ENCODE measurements at regions of chr11 and their contacts with region 1.

Region 1: DNA sequence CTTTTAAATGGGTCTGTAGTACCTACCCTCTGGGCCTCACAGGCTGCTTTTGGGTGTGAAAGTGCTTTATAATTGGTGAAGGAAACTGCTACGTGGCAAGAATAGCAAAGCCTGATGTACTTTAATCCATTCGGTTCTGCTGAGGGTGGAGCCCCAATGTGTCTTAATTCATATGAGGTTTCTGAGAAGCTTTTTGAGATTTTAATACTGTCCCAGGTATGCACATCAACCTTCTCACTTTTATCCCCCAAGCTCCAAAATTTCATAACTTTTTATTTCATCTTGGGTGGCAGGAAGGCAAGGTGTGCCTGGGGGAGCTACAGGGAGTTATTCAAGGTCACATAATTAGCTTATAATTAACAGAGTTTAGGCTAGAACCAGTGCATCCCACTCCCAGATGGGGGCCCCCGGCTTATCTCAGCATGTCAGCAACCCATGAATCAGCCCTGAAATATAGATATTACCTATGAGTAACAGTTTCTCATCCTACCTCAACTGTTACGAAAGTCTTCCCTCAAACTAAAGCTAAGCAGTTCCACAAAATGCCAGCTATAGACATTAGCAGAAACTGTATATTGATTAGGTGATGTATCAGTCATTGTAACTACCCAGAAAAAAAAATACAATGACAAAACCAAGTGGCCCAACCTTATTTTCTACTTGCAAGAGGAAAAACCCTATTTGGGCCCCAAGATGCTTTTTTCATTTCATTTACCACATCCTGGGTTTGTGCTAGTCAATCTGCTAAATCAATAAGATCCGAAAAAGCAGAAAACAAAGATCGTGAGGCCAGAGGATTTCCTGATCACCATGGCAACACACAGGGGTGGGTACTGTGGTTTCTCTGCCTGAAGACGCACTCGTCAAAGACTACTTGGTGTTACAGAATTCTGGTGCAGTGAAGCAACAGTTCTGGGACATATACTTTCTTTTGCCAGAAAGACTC is 26.7 kb downstream of the CD44 start:
- DNase-seq: peak; percentile 50 to 97 (median 90)
- ATAC-seq: peak; percentile 79 to 85 (median 84)
- H3K4me3 ChIP-seq: peak overlapping the region; percentile 35 to 46
- H3K4me3 Mint-ChIP-seq: peak overlapping the region; percentile 69 to 79 (median 78)
- H3K27ac ChIP-seq: peak overlapping the region; percentile 99
- H3K27ac Mint-ChIP-seq: peak overlapping the region; percentile 100
- H3K4me1 ChIP-seq: peaks cover 90 to 92% of the 10 kb centered on the region in 2 experiments
- H3K4me1 Mint-ChIP-seq: peaks cover 100% of the 10 kb centered on the region in 3 donors
- H3K27me3 ChIP-seq: no peaks in the 10 kb centered on the region
- H3K27me3 Mint-ChIP-seq: no peaks in the 10 kb centered on the region

Region 2: GRCh38 chr11:35013514-35014233 is 152.0 kb before region 1 on chr11:
- CTCF ChIA-PET with region 1: no interaction called
- POLR2A ChIA-PET with region 1: interaction called in 1 of 2 experiments, 23 read pairs
- DNase-seq: peak in 19 of 35 experiments; percentile 5 to 75 (median 32)
- ATAC-seq: peak; percentile 38 to 64 (median 47)
- H3K4me3 ChIP-seq: no peak overlapping the region
- H3K4me3 Mint-ChIP-seq: peak overlapping the region; percentile 21 to 62 (median 22)
- H3K27ac ChIP-seq: peak overlapping the region; percentile 90
- H3K27ac Mint-ChIP-seq: peak overlapping the region; percentile 85 to 86
- H3K4me1 ChIP-seq: peaks cover 13 to 23% of the 10 kb centered on the region in 2 experiments
- H3K4me1 Mint-ChIP-seq: peaks cover 23 to 38% (median 32%) of the 10 kb centered on the region in 3 donors
- H3K27me3 ChIP-seq: no peaks in the 10 kb centered on the region
- H3K27me3 Mint-ChIP-seq: no peaks in the 10 kb centered on the region

Region 3: GRCh38 chr11:35047179-35047578 is 118.5 kb before region 1 on chr11:
- CTCF ChIA-PET with region 1: interaction called in 1 of 2 experiments, 7 read pairs
- POLR2A ChIA-PET with region 1: interaction called, 5 to 72 read pairs
- DNase-seq: peak in 34 of 35 experiments; percentile 29 to 86 (median 58)
- ATAC-seq: peak; percentile 67 to 72 (median 70)
- H3K4me3 ChIP-seq: no peak overlapping the region
- H3K4me3 Mint-ChIP-seq: peak overlapping the region; percentile 1 to 77 (median 42)
- H3K27ac ChIP-seq: peak overlapping the region; percentile 98
- H3K27ac Mint-ChIP-seq: peak overlapping the region; percentile 93 to 95
- H3K4me1 ChIP-seq: peaks cover 59 to 85% of the 10 kb centered on the region in 2 experiments
- H3K4me1 Mint-ChIP-seq: peaks cover 95 to 97% (median 97%) of the 10 kb centered on the region in 3 donors
- H3K27me3 ChIP-seq: no peaks in the 10 kb centered on the region
- H3K27me3 Mint-ChIP-seq: no peaks in the 10 kb centered on the region

Region 4: DNA sequence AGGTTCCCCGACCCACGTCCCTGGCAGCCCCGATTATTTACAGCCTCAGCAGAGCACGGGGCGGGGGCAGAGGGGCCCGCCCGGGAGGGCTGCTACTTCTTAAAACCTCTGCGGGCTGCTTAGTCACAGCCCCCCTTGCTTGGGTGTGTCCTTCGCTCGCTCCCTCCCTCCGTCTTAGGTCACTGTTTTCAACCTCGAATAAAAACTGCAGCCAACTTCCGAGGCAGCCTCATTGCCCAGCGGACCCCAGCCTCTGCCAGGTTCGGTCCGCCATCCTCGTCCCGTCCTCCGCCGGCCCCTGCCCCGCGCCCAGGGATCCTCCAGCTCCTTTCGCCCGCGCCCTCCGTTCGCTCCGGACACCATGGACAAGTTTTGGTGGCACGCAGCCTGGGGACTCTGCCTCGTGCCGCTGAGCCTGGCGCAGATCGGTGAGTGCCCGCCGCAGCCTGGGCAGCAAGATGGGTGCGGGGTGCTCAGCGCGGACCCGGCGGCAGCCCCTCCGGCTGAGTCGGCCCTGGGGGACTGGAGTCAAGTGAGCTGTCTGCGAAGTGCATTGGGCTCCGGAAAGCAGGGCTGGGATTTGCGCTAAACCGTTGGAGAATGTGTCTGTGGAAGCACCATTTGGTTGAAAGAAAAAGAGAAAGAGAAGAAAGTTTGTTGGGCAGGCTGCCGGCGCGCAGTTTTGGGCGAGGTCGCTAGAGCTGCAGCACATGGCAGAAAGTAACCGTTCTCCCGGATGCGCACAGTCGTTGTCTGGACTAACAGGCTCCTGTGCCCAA is 26.6 kb before region 1 on chr11 and contains the start of gene CD44:
- CTCF ChIA-PET with region 1: interaction called, 4 to 11 read pairs
- POLR2A ChIA-PET with region 1: interaction called, 7 to 110 read pairs
- DNase-seq: peak; percentile 53 to 88 (median 76)
- ATAC-seq: peak; percentile 78 to 88 (median 86)
- H3K4me3 ChIP-seq: peak within 1 kb of the TSS; percentile 85 to 99
- H3K4me3 Mint-ChIP-seq: peak within 1 kb of the TSS; percentile 91 to 98 (median 98)
- H3K27ac ChIP-seq: peak within 1 kb of the TSS; percentile 91
- H3K27ac Mint-ChIP-seq: peak within 1 kb of the TSS; percentile 97 to 98
- H3K4me1 ChIP-seq: peaks cover 30 to 38% of the 10 kb centered on the region in 2 experiments
- H3K4me1 Mint-ChIP-seq: peaks cover 48 to 63% (median 52%) of the 10 kb centered on the region in 3 donors
- H3K27me3 ChIP-seq: no peaks in the 10 kb centered on the region
- H3K27me3 Mint-ChIP-seq: no peaks in the 10 kb centered on the region
- total RNA-seq, gene CD44: 732 to 1,108 (median 781) TPM

Region 5: DNA sequence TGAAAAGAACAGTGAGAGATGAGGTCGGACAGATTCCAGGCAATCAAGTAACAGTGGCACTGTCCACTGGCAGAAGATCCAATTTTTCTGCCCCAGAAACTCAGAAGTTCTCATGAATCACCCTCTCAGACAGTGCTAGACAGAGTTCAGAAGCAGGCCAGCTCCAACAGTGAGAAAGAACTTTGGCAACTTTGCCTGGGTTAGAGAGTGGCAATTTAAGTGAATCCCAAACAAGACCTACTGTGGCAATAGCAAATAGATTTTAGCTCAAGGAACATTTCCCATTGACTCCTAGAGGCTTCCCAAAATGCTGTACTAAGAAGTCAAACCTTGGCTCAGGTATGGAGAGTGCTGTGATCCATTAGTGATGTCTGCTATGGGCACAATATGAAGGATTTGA is 14.5 kb before region 1 on chr11:
- CTCF ChIA-PET with region 1: interaction called, 9 to 21 read pairs
- POLR2A ChIA-PET with region 1: interaction called, 6 to 165 read pairs
- DNase-seq: no peak
- ATAC-seq: no peak
- H3K4me3 ChIP-seq: no peak overlapping the region
- H3K4me3 Mint-ChIP-seq: peak overlapping the region; percentile 11 to 91 (median 53)
- H3K27ac ChIP-seq: peak overlapping the region; percentile 57
- H3K27ac Mint-ChIP-seq: peak overlapping the region; percentile 88 to 89
- H3K4me1 ChIP-seq: peaks cover 72 to 88% of the 10 kb centered on the region in 2 experiments
- H3K4me1 Mint-ChIP-seq: peaks cover 99 to 100% (median 100%) of the 10 kb centered on the region in 3 donors
- H3K27me3 ChIP-seq: no peaks in the 10 kb centered on the region
- H3K27me3 Mint-ChIP-seq: no peaks in the 10 kb centered on the region

Region 6: GRCh38 chr11:35246745-35247144 is 81.0 kb after region 1 on chr11:
- CTCF ChIA-PET with region 1: interaction called in 1 of 2 experiments, 12 read pairs
- POLR2A ChIA-PET with region 1: interaction called, 6 to 39 read pairs
- DNase-seq: no peak
- ATAC-seq: no peak
- H3K4me3 ChIP-seq: no peak overlapping the region
- H3K4me3 Mint-ChIP-seq: peak overlapping the region in 1 of 3 donors; percentile 55
- H3K27ac ChIP-seq: peak overlapping the region; percentile 95
- H3K27ac Mint-ChIP-seq: peak overlapping the region; percentile 96
- H3K4me1 ChIP-seq: peaks cover 13 to 48% of the 10 kb centered on the region in 2 experiments
- H3K4me1 Mint-ChIP-seq: peaks cover 47 to 80% (median 69%) of the 10 kb centered on the region in 3 donors
- H3K27me3 ChIP-seq: no peaks in the 10 kb centered on the region
- H3K27me3 Mint-ChIP-seq: no peaks in the 10 kb centered on the region